CD14-positive monocyte (primary cell): ENCODE measurements at regions of chr6 and their contacts with region 1.

Region 1: GRCh38 chr6:41929924-41930323 is 8.6 kb downstream of the BYSL start:
- DNase-seq: no peak
- H3K4me3 ChIP-seq: no peak overlapping the region
- H3K4me3 Mint-ChIP-seq: no peak overlapping the region
- H3K27ac ChIP-seq: peak overlapping the region in 1 of 2 donors; percentile 58
- H3K27ac Mint-ChIP-seq: peak overlapping the region in 4 of 7 donors; percentile 7 to 46 (median 34)
- H3K4me1 ChIP-seq: peaks cover 4 to 7% of the 10 kb centered on the region in 2 donors
- H3K4me1 Mint-ChIP-seq: peaks cover 7% of the 10 kb centered on the region
- H3K27me3 ChIP-seq: no peaks in the 10 kb centered on the region
- H3K27me3 Mint-ChIP-seq: peaks cover 0 to 4% (median 0%) of the 10 kb centered on the region in 3 donors
- CTCF ChIP-seq: no peak

Region 2: DNA sequence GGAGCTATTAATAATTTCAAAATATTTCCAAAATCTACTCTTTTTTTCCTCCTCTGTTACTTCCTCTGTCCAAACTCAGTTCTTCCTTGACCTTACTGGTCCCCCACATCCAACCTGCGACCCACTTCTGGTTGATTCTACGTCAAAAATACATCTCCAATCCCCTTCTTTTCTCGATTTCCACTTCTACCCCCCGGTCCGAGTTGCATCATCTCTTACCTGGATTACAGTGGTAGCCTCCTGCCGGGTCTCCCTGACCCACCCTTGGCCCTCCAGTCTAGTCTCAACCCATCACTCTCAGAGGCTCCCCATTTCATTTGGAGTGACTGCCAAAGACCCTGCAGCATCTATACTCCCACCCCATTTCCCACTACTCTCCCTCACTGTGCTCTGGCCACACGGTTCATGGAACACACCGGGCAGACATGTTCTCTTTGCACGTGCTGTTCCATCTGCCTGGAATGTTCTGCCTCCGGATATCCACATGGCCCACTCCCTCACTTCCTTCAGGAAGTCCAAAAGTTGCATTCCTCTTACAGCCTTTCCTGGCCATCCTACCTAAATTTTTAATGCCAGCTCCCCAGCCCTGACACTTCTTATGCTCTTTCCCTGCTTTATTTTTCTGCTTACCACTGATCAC is 17.8 kb after region 1 on chr6:
- intact Hi-C with region 1: loop called in 1 of 2 experiments (anchors 2 kb)
- DNase-seq: no peak
- H3K4me3 ChIP-seq: no peak overlapping the region
- H3K4me3 Mint-ChIP-seq: no peak overlapping the region
- H3K27ac ChIP-seq: no peak overlapping the region
- H3K27ac Mint-ChIP-seq: peak overlapping the region in 1 of 7 donors; percentile 45
- H3K4me1 ChIP-seq: peaks cover 15 to 22% of the 10 kb centered on the region in 2 donors
- H3K4me1 Mint-ChIP-seq: peaks cover 13% of the 10 kb centered on the region
- H3K27me3 ChIP-seq: no peaks in the 10 kb centered on the region
- H3K27me3 Mint-ChIP-seq: peaks cover 0 to 3% (median 2%) of the 10 kb centered on the region in 3 donors
- CTCF ChIP-seq: no peak